ENCODE measurements at regions of chr4 and their contacts with region 1.

Region 1: DNA sequence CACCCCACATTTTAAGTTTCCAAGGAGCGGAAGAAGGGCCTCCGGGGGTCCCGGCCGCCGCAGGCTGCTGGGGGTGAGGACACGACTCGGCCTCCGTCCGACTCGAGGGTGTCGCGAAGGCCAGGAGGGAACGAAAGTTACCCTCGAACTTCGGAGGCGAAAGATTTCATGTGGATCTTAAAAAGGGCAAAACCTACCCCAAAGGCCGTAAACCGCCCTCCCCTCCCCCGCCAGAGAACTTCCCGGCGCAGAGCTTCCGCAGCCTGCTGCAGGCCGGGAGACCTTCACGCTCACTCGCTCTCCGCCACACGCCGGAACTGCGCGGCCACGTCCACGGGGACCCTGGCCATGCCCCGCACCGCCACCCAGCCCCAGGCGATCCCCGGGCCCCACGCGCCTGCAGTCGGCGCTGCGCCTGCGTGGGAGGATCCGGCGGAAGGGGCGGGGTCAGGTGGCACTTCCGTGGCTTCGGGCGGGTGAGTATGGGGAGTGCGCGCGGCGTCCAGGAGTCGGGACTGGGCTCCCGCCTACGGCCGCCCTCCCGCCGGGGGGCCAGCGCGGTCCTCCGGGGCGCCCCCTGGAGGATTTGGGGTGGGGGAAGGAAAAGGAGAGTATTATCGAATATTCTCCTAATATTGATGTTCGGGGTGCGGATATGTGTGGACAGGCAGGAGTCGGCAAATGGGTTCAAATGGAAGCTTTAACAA is at the start of gene MMAA:
- DNase-seq: peak; percentile 97
- H3K4me3 Mint-ChIP-seq: peak within 1 kb of the TSS; percentile 94
- H3K27ac Mint-ChIP-seq: peak within 1 kb of the TSS; percentile 100
- H3K4me1 Mint-ChIP-seq: peaks cover 46% of the 10 kb centered on the region
- H3K27me3 Mint-ChIP-seq: no peaks in the 10 kb centered on the region
- total RNA-seq, gene MMAA: 24.4 to 25.1 TPM

Region 2: DNA sequence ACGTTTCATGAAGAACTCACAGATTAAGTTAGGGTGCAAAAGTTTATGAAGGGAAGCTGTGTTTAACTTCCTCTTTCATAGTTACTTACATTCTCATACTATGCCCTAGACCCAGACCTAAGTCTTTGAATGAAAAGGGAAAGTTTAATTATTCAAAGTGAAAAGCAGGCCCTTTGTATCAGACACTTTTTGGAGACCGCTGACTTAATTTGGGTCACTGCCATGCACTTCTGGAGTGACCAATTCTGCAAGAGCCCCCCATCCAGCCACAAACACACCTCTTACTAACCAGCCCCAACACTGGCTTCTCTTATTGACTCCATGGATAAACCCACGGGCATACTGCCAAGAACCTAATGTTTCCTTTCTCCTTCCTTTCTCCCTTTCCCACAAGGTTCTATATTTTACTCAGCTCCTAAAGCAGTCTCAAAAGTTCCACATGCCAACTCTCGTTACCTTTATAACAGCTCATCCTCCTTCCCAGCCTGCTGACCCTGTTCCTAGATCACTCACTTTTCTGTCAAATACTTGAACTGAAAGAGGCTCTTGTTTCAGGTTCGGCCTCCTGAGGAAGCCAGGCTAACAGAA is 486.5 kb before region 1 on chr4:
- CTCF ChIA-PET with region 1: no interaction called
- POLR2A ChIA-PET with region 1: no interaction called
- intact Hi-C with region 1: loop called (anchors 2 kb)
- DNase-seq: peak; percentile 56
- H3K4me3 Mint-ChIP-seq: no peak overlapping the region
- H3K27ac Mint-ChIP-seq: peak overlapping the region; percentile 52
- H3K4me1 Mint-ChIP-seq: peaks cover 59% of the 10 kb centered on the region
- H3K27me3 Mint-ChIP-seq: no peaks in the 10 kb centered on the region

Region 3: GRCh38 chr4:145308598-145308997 is 310.5 kb before region 1 on chr4:
- CTCF ChIA-PET with region 1: no interaction called
- POLR2A ChIA-PET with region 1: no interaction called
- intact Hi-C with region 1: loop called (anchors 5 kb)
- DNase-seq: no peak
- H3K4me3 Mint-ChIP-seq: no peak overlapping the region
- H3K27ac Mint-ChIP-seq: no peak overlapping the region
- H3K4me1 Mint-ChIP-seq: peaks cover 19% of the 10 kb centered on the region
- H3K27me3 Mint-ChIP-seq: peaks cover 9% of the 10 kb centered on the region

Region 4: DNA sequence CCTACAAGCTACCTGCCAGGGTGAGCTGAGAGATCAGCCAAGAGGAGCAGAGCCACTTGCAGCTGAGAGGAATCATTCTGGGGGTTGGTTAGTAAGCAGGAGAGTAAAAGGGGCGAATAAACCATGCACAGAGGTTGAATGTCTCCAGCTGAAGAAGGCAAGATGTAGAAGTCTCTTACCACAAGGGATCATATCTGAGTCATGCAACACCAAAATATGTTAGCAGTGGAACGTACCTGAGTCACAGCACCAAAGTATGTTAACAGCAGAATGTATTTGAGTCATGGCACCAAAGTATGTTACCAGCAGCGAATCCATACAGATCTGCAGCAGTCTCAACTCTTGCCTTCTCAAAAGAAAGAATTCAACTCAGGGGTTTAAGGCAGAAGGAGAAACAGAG is 90.8 kb after region 1 on chr4:
- CTCF ChIA-PET with region 1: interaction called, 3 read pairs
- POLR2A ChIA-PET with region 1: no interaction called
- intact Hi-C with region 1: loop called (anchors 1 kb)
- DNase-seq: peak; percentile 30
- H3K4me3 Mint-ChIP-seq: no peak overlapping the region
- H3K27ac Mint-ChIP-seq: no peak overlapping the region
- H3K4me1 Mint-ChIP-seq: peaks cover 14% of the 10 kb centered on the region
- H3K27me3 Mint-ChIP-seq: peaks cover 5% of the 10 kb centered on the region

Region 5: DNA sequence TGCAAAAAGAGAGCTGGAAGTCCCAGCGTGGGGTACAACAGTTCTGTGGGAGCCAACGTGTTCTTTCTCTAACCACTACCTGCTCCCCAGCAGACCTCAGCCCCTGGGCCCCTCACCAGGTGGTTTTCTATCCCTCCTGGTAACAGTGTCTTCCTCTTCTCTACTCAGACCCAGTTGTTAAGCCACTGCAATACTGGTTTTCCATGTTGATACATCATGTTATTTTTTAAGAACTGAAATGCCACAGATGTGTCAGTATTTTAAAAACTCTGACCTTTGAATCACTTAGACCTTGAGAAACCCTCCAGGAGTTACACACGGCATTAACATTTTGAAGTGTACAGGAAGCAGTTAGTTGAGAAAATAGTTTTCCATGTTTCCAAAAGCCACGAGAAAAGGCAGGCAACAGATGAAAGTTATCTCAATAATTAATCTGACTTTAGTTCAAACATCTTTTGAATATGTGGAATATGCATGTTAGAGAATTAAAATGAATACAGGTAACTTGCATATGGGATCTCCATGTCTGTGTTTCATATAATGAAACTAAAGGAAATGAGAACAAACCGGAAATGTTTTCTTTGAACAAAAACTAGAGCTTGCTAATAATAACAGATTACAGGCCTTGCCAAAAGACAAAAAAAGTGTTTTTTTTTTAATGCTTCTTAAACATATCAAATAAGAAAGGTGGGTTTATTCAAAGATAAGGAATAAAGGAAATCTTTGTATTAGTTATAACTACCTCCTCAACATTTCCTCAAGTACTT is 210.7 kb after region 1 on chr4:
- CTCF ChIA-PET with region 1: no interaction called
- POLR2A ChIA-PET with region 1: interaction called, 3 read pairs
- intact Hi-C with region 1: loop called (anchors 1 kb)
- DNase-seq: peak; percentile 73
- H3K4me3 Mint-ChIP-seq: peak overlapping the region; percentile 46
- H3K27ac Mint-ChIP-seq: peak overlapping the region; percentile 71
- H3K4me1 Mint-ChIP-seq: peaks cover 46% of the 10 kb centered on the region
- H3K27me3 Mint-ChIP-seq: no peaks in the 10 kb centered on the region

Region 6: GRCh38 chr4:146175541-146176453 is 556.7 kb after region 1 on chr4 and contains the start of gene LSM6:
- CTCF ChIA-PET with region 1: interaction called, 3 read pairs
- POLR2A ChIA-PET with region 1: no interaction called
- intact Hi-C with region 1: loop called (anchors 5 kb)
- DNase-seq: peak; percentile 89
- H3K4me3 Mint-ChIP-seq: peak within 1 kb of the TSS; percentile 83
- H3K27ac Mint-ChIP-seq: peak within 1 kb of the TSS; percentile 87
- H3K4me1 Mint-ChIP-seq: peaks cover 42% of the 10 kb centered on the region
- H3K27me3 Mint-ChIP-seq: no peaks in the 10 kb centered on the region
- total RNA-seq, gene LSM6: 64.2 to 65.5 TPM